SK-N-SH (cell line): ENCODE measurements at regions of chr14 and their contacts with region 1.

Region 1: GRCh38 chr14:55245657-55246268 is 25.5 kb upstream of the FBXO34 start:
- DNase-seq: no peak
- H3K4me3 ChIP-seq: no peak overlapping the region
- H3K27ac ChIP-seq: no peak overlapping the region
- H3K4me1 ChIP-seq: no peaks in the 10 kb centered on the region; a peak in 1 of 4 replicates
- H3K27me3 ChIP-seq: peaks cover 7% of the 10 kb centered on the region
- CTCF ChIP-seq: peak; percentile 72
- EP300 ChIP-seq: no peak
- RAD21 ChIP-seq: peak; percentile 50

Region 2: GRCh38 chr14:55265197-55265596 is 19.4 kb after region 1 on chr14:
- CTCF ChIA-PET with region 1: interaction called, 31 read pairs
- POLR2A ChIA-PET with region 1: no interaction called
- DNase-seq: no peak
- H3K4me3 ChIP-seq: no peak overlapping the region
- H3K27ac ChIP-seq: no peak overlapping the region
- H3K4me1 ChIP-seq: peaks cover 0 to 4% of the 10 kb centered on the region in 2 experiments; a peak in 1 of 4 replicates
- H3K27me3 ChIP-seq: no peaks in the 10 kb centered on the region
- CTCF ChIP-seq: no peak
- EP300 ChIP-seq: no peak
- RAD21 ChIP-seq: no peak

Region 3: GRCh38 chr14:55348766-55349453 is 103.1 kb after region 1 on chr14:
- CTCF ChIA-PET with region 1: interaction called, 11 read pairs
- POLR2A ChIA-PET with region 1: no interaction called
- DNase-seq: no peak
- H3K4me3 ChIP-seq: no peak overlapping the region
- H3K27ac ChIP-seq: peak overlapping the region in 1 of 2 experiments; percentile 34; a peak in 1 of 4 replicates
- H3K4me1 ChIP-seq: peaks cover 0 to 9% of the 10 kb centered on the region in 2 experiments; a peak in 2 of 4 replicates
- H3K27me3 ChIP-seq: no peaks in the 10 kb centered on the region
- CTCF ChIP-seq: no peak
- EP300 ChIP-seq: no peak
- RAD21 ChIP-seq: no peak

Region 4: DNA sequence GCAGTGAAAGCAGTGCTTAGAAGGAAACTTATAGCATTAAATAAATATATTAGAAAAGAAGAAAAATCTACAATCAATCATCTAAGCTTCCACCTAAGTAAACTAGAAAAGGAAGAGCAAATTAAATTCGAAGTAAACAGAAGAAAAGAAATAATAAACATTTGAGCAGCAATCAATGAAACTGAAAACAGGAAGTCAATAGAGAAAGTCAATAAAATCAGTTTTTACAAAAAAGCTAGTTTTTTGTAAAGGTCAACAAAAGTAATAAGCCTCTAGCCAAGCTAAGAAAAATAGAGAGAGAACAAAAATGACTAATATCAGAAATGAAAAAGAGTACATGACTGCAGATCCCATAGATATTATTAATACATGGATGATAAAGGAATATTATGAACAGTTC is 300.0 kb after region 1 on chr14:
- CTCF ChIA-PET with region 1: no interaction called
- POLR2A ChIA-PET with region 1: no interaction called
- DNase-seq: no peak
- H3K4me3 ChIP-seq: no peak overlapping the region
- H3K27ac ChIP-seq: no peak overlapping the region
- H3K4me1 ChIP-seq: peaks cover 6 to 8% of the 10 kb centered on the region in 2 experiments
- H3K27me3 ChIP-seq: no peaks in the 10 kb centered on the region
- CTCF ChIP-seq: no peak
- EP300 ChIP-seq: no peak
- RAD21 ChIP-seq: no peak